ENCODE measurements at regions of chr11 and their contacts with region 1.

Region 1: DNA sequence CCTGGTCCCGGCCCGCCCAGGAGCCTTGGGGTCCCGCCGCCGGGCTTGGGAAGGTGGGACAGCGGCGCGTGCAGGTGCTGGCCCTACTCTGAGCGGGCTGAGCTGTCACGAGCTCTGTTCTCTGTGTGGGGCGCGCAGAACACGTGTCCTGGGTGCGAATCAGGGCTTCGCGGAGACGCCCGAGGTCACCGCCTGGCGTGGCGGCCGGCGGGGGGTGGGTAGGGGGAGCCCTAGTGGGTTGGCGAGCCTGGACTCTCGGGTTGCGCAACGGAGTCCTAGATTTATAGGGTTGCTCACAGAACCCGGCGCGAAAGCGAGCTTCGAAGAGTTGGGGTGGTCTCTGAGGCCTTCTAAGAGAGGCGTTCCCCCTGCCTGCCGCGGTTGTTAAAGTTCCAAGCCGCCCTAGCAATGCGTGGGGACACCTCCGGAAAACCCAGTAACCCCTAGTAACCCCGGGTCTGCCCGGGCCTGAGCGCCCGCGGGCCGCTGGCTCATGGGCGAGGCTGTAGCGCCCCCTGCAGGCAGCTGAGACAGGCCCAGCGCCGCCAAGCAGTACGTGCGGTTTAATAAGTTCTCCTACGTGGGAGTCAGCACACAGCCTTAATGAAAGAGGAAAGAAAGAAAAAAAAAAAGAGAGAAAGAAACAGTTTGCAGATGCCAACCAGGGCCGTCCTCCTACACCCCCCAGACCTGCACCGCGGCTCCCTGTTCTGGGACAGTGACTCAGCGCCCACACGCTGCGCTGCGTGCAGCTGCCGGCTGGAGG is 2.8 kb downstream of the ADM start:
- DNase-seq: peak; percentile 71 to 88 (median 83)
- ATAC-seq: peak; percentile 63 to 78
- H3K4me3 Mint-ChIP-seq: peak overlapping the region; percentile 77 to 100 (median 92)
- H3K27ac Mint-ChIP-seq: peak overlapping the region in 5 of 10 donors; percentile 28 to 76 (median 59)
- H3K4me1 Mint-ChIP-seq: peaks cover 18 to 58% (median 34%) of the 10 kb centered on the region in 4 donors
- H3K27me3 Mint-ChIP-seq: peaks cover 15 to 57% (median 29%) of the 10 kb centered on the region in 5 donors

Region 2: GRCh38 chr11:9936754-9937153 is 370.9 kb before region 1 on chr11:
- POLR2A ChIA-PET with region 1: interaction called, 11 read pairs
- DNase-seq: no peak
- ATAC-seq: no peak
- H3K4me3 Mint-ChIP-seq: no peak overlapping the region
- H3K27ac Mint-ChIP-seq: no peak overlapping the region
- H3K4me1 Mint-ChIP-seq: peaks cover 0 to 4% (median 4%) of the 10 kb centered on the region in 4 donors
- H3K27me3 Mint-ChIP-seq: no peaks in the 10 kb centered on the region

Region 3: GRCh38 chr11:10208131-10208575 is 99.5 kb before region 1 on chr11:
- POLR2A ChIA-PET with region 1: interaction called, 18 read pairs
- DNase-seq: peak in 3 of 10 donors; percentile 58
- ATAC-seq: peak; percentile 57 to 68
- H3K4me3 Mint-ChIP-seq: no peak overlapping the region
- H3K27ac Mint-ChIP-seq: no peak overlapping the region
- H3K4me1 Mint-ChIP-seq: peaks cover 0 to 1% (median 0%) of the 10 kb centered on the region in 4 donors
- H3K27me3 Mint-ChIP-seq: no peaks in the 10 kb centered on the region